Activated CD4-positive, alpha-beta T cell treated with anti-CD3 and anti-CD28 coated beads for 36 hours (primary cell): ENCODE measurements at regions of chr1 and their contacts with region 1.

Region 1: GRCh38 chr1:100037927-100038659 is 68.3 kb downstream of the SLC35A3 start:
- DNase-seq: peak; percentile 95
- ATAC-seq: peak; percentile 80
- H3K4me3 Mint-ChIP-seq: peak overlapping the region; percentile 95
- H3K27ac Mint-ChIP-seq: peak overlapping the region; percentile 98
- H3K4me1 Mint-ChIP-seq: peaks cover 51% of the 10 kb centered on the region
- H3K27me3 Mint-ChIP-seq: no peaks in the 10 kb centered on the region

Region 2: GRCh38 chr1:99849744-99850458 is 188.2 kb before region 1 on chr1 and contains the start of gene AGL:
- CTCF ChIA-PET with region 1: no interaction called
- POLR2A ChIA-PET with region 1: no interaction called
- intact Hi-C with region 1: loop called (anchors 1 to 2 kb)
- DNase-seq: peak; percentile 93
- ATAC-seq: peak; percentile 97
- H3K4me3 Mint-ChIP-seq: peak within 1 kb of the TSS; percentile 94
- H3K27ac Mint-ChIP-seq: peak within 1 kb of the TSS; percentile 96
- H3K4me1 Mint-ChIP-seq: peaks cover 35% of the 10 kb centered on the region
- H3K27me3 Mint-ChIP-seq: no peaks in the 10 kb centered on the region
- total RNA-seq, gene AGL: 14.6 to 18.3 TPM

Region 3: GRCh38 chr1:99950486-99950885 is 87.6 kb before region 1 on chr1:
- CTCF ChIA-PET with region 1: no interaction called
- POLR2A ChIA-PET with region 1: no interaction called
- intact Hi-C with region 1: no loop called
- DNase-seq: no peak
- ATAC-seq: no peak
- H3K4me3 Mint-ChIP-seq: no peak overlapping the region
- H3K27ac Mint-ChIP-seq: no peak overlapping the region
- H3K4me1 Mint-ChIP-seq: no peaks in the 10 kb centered on the region
- H3K27me3 Mint-ChIP-seq: no peaks in the 10 kb centered on the region

Region 4: DNA sequence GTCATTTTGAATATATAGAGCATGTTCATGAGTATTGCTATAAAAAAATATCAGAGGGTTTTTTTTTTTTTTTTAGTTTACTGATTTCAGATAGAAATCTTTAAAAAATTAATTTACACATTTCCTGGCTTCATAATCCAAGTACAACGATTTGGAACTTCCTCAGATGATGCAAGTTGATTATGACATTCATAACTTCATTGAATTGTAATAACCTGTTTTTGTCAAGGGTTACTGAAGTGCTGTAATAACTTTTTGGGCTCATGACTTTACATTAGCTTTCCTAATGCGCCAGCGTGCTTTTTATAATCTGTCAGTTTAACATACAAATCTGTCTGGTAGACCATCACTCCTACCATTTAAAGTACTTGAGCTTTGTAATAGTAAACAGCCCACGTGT is 13.3 kb after region 1 on chr1:
- CTCF ChIA-PET with region 1: interaction called, 8 read pairs
- POLR2A ChIA-PET with region 1: interaction called, 7 read pairs
- intact Hi-C with region 1: loop called in 1 of 2 experiments (anchors 1 kb)
- DNase-seq: no peak
- ATAC-seq: no peak
- H3K4me3 Mint-ChIP-seq: no peak overlapping the region
- H3K27ac Mint-ChIP-seq: no peak overlapping the region
- H3K4me1 Mint-ChIP-seq: peaks cover 55% of the 10 kb centered on the region
- H3K27me3 Mint-ChIP-seq: no peaks in the 10 kb centered on the region

Region 5: DNA sequence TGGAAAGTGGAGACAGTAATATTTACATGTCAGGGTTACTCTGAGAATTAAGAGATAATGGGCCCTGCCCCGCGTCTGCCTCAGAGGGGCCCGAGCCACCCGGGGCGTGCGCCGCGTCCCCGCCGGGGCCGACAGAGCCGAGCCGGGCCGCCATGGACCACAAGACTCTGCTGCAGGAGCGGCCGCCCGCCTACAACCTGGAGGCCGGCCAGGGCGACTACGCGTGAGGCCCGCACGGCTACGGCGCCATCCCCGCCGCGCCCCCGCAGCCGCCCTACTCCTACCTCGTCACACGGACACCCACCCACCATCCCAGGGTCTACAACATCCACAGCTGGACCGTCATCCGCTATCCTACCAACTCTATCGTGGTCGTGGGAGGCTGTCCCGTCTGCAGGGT is 175.0 kb after region 1 on chr1:
- CTCF ChIA-PET with region 1: no interaction called
- POLR2A ChIA-PET with region 1: no interaction called
- intact Hi-C with region 1: no loop called
- DNase-seq: no peak
- ATAC-seq: no peak
- H3K4me3 Mint-ChIP-seq: no peak overlapping the region
- H3K27ac Mint-ChIP-seq: no peak overlapping the region
- H3K4me1 Mint-ChIP-seq: no peaks in the 10 kb centered on the region
- H3K27me3 Mint-ChIP-seq: no peaks in the 10 kb centered on the region

Region 6: GRCh38 chr1:100249537-100250257 is 211.6 kb after region 1 on chr1 and contains the start of gene DBT:
- CTCF ChIA-PET with region 1: no interaction called
- POLR2A ChIA-PET with region 1: no interaction called
- intact Hi-C with region 1: loop called in 1 of 2 experiments (anchors 1 kb)
- DNase-seq: peak; percentile 96
- ATAC-seq: peak; percentile 100
- H3K4me3 Mint-ChIP-seq: no peak within 1 kb of the TSS
- H3K27ac Mint-ChIP-seq: no peak within 1 kb of the TSS
- H3K4me1 Mint-ChIP-seq: peaks cover 16% of the 10 kb centered on the region
- H3K27me3 Mint-ChIP-seq: no peaks in the 10 kb centered on the region
- total RNA-seq, gene DBT: 11.0 to 12.8 TPM

Region 7: DNA sequence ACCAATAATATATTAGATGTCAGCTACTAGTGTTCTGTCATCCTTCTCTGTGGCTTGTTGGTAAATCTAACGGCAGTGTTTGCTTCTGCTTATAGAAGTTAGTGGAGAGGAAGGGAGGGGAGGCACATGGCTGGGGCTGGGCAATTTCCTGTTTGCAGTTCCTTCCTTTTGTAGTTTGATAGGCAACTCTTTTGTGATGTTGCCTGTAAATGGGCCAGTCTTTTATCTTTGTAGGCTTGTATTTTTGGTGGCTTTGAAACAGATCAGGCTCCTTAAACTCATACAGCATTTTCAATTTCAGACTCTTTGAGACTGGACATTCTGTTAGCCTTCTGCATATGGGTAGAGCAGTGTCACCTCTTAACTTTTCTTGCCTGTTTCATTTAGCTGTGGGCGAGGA is 362.3 kb after region 1 on chr1:
- CTCF ChIA-PET with region 1: no interaction called
- POLR2A ChIA-PET with region 1: no interaction called
- intact Hi-C with region 1: loop called in 1 of 2 experiments (anchors 5 kb)
- DNase-seq: peak; percentile 67
- ATAC-seq: peak; percentile 51
- H3K4me3 Mint-ChIP-seq: peak overlapping the region; percentile 60
- H3K27ac Mint-ChIP-seq: peak overlapping the region; percentile 92
- H3K4me1 Mint-ChIP-seq: peaks cover 84% of the 10 kb centered on the region
- H3K27me3 Mint-ChIP-seq: no peaks in the 10 kb centered on the region

Region 8: GRCh38 chr1:100895540-100896483 is 857.7 kb after region 1 on chr1 and contains the start of gene SLC30A7:
- CTCF ChIA-PET with region 1: no interaction called
- POLR2A ChIA-PET with region 1: no interaction called
- intact Hi-C with region 1: loop called (anchors 1 to 2 kb)
- DNase-seq: peak; percentile 98
- ATAC-seq: peak; percentile 81
- H3K4me3 Mint-ChIP-seq: peak within 1 kb of the TSS; percentile 100
- H3K27ac Mint-ChIP-seq: peak within 1 kb of the TSS; percentile 100
- H3K4me1 Mint-ChIP-seq: peaks cover 44% of the 10 kb centered on the region
- H3K27me3 Mint-ChIP-seq: no peaks in the 10 kb centered on the region
- total RNA-seq, gene SLC30A7: 33.2 to 34.6 TPM